GM12878 (cell line): ENCODE measurements at regions of chrX and their contacts with region 1.

Region 1: GRCh38 chrX:152941328-152942106 is 43.6 kb downstream of the ZNF185 start:
- DNase-seq: peak; percentile 69
- ATAC-seq: peak; percentile 97
- H3K4me3 ChIP-seq: peak overlapping the region; percentile 72
- H3K27ac ChIP-seq: peak overlapping the region; percentile 37; the same call in 1 of the 2 replicates
- H3K4me1 ChIP-seq: no peaks in the 10 kb centered on the region
- H3K27me3 ChIP-seq: no peaks in the 10 kb centered on the region; a peak in 2 of 4 replicates
- CTCF ChIP-seq: peak; percentile 72 to 85 (median 75)
- EP300 ChIP-seq: no peak
- POLR2A ChIP-seq: peak; percentile 64
- RAD21 ChIP-seq: peak; percentile 71

Region 2: GRCh38 chrX:152958524-152959465 is 17.3 kb after region 1 on chrX:
- CTCF ChIA-PET with region 1: interaction called, 5 read pairs
- POLR2A ChIA-PET with region 1: interaction called, 3 read pairs
- RAD21 ChIA-PET with region 1: interaction called, 11 read pairs
- SMC1A ChIA-PET with region 1: interaction called, 6 read pairs
- in situ Hi-C with region 1: no loop called
- intact Hi-C with region 1: no loop called
- DNase-seq: peak; percentile 55
- ATAC-seq: peak; percentile 100
- H3K4me3 ChIP-seq: peak overlapping the region; percentile 53; the same call in 1 of the 2 replicates
- H3K27ac ChIP-seq: no peak overlapping the region
- H3K4me1 ChIP-seq: no peaks in the 10 kb centered on the region
- H3K27me3 ChIP-seq: no peaks in the 10 kb centered on the region
- CTCF ChIP-seq: peak; percentile 87 to 97 (median 89)
- EP300 ChIP-seq: no peak
- POLR2A ChIP-seq: 0 out of 2 replicates have a peak, but pooled peaks have one; percentile 38
- RAD21 ChIP-seq: peak; percentile 90

Region 3: GRCh38 chrX:153003981-153004380 is 62.5 kb after region 1 on chrX:
- CTCF ChIA-PET with region 1: no interaction called
- POLR2A ChIA-PET with region 1: no interaction called
- RAD21 ChIA-PET with region 1: no interaction called
- SMC1A ChIA-PET with region 1: no interaction called
- in situ Hi-C with region 1: no loop called
- intact Hi-C with region 1: no loop called
- DNase-seq: no peak
- ATAC-seq: no peak
- H3K4me3 ChIP-seq: no peak overlapping the region
- H3K27ac ChIP-seq: no peak overlapping the region
- H3K4me1 ChIP-seq: no peaks in the 10 kb centered on the region
- H3K27me3 ChIP-seq: no peaks in the 10 kb centered on the region
- CTCF ChIP-seq: no peak
- EP300 ChIP-seq: no peak
- POLR2A ChIP-seq: no peak
- RAD21 ChIP-seq: no peak

Region 4: DNA sequence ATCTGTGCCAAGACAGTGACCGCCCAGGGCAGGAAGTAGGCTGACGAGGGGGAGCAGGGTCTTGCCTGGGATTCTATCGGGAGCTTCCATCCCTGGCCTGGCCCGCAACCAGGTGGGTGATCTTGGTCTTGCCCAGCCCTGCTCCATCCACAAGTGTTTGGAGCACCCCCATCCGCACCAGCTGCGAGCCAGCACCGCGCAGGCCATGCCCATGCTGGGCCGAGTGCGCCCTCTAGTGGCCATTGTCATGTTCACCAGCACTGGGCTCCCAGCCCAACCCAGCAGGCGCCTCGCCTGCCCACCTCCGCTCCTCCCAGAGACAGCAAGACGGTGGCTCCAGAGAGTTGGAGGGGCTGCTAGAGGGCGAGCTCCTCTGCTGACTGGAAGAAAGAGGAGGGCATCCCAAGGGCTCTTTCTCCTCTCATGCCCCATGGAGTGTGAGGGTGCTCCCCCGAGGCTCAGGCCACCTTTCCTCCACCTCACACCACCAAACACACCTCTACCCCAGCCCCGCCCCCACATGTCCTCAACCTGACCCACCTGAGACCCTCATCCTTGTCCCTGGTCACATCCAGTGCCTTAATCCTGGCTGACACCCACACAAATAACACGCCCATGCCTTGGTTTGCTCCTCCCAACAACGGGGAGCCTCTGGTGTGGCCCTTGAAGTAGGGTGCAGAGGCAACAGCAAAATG is 566.1 kb after region 1 on chrX:
- CTCF ChIA-PET with region 1: interaction called, 21 read pairs
- POLR2A ChIA-PET with region 1: no interaction called
- RAD21 ChIA-PET with region 1: no interaction called
- SMC1A ChIA-PET with region 1: interaction called, 3 read pairs
- in situ Hi-C with region 1: loop called (anchors 10 kb)
- intact Hi-C with region 1: loop called (anchors 1 kb)
- DNase-seq: no peak
- ATAC-seq: peak; percentile 99
- H3K4me3 ChIP-seq: no peak overlapping the region
- H3K27ac ChIP-seq: no peak overlapping the region
- H3K4me1 ChIP-seq: no peaks in the 10 kb centered on the region
- H3K27me3 ChIP-seq: no peaks in the 10 kb centered on the region
- CTCF ChIP-seq: peak; percentile 75 to 88 (median 83)
- EP300 ChIP-seq: no peak
- POLR2A ChIP-seq: no peak
- RAD21 ChIP-seq: peak; percentile 74

Region 5: GRCh38 chrX:153539171-153539978 is 597.9 kb after region 1 on chrX:
- CTCF ChIA-PET with region 1: interaction called, 12 read pairs
- POLR2A ChIA-PET with region 1: no interaction called
- RAD21 ChIA-PET with region 1: interaction called, 4 read pairs
- SMC1A ChIA-PET with region 1: interaction called, 3 read pairs
- in situ Hi-C with region 1: no loop called
- intact Hi-C with region 1: no loop called
- DNase-seq: no peak
- ATAC-seq: peak; percentile 96
- H3K4me3 ChIP-seq: no peak overlapping the region
- H3K27ac ChIP-seq: no peak overlapping the region
- H3K4me1 ChIP-seq: no peaks in the 10 kb centered on the region
- H3K27me3 ChIP-seq: no peaks in the 10 kb centered on the region
- CTCF ChIP-seq: peak; percentile 85 to 91 (median 88)
- EP300 ChIP-seq: no peak
- POLR2A ChIP-seq: no peak
- RAD21 ChIP-seq: peak; percentile 65

Region 6: GRCh38 chrX:153662266-153662665 is 720.7 kb after region 1 on chrX:
- CTCF ChIA-PET with region 1: interaction called, 25 read pairs
- POLR2A ChIA-PET with region 1: no interaction called
- RAD21 ChIA-PET with region 1: interaction called, 6 read pairs
- SMC1A ChIA-PET with region 1: interaction called, 3 read pairs
- in situ Hi-C with region 1: no loop called
- intact Hi-C with region 1: loop called (anchors 5 kb)
- DNase-seq: no peak
- ATAC-seq: no peak
- H3K4me3 ChIP-seq: no peak overlapping the region
- H3K27ac ChIP-seq: no peak overlapping the region
- H3K4me1 ChIP-seq: no peaks in the 10 kb centered on the region
- H3K27me3 ChIP-seq: no peaks in the 10 kb centered on the region
- CTCF ChIP-seq: peak; percentile 23 to 35 (median 35); a peak in 5 of 6 replicates
- EP300 ChIP-seq: no peak
- POLR2A ChIP-seq: no peak
- RAD21 ChIP-seq: peak; percentile 39